ENCODE measurements at regions of chr16 and their contacts with region 1.

Region 1: GRCh38 chr16:8878521-8878911 is 3.6 kb upstream of the LITAFD start:
- DNase-seq: peak; percentile 77
- ATAC-seq: peak; percentile 65
- H3K4me3 ChIP-seq: peak overlapping the region; percentile 33; the same call in 1 of the 2 replicates
- H3K27ac ChIP-seq: peak overlapping the region; percentile 83
- H3K4me1 ChIP-seq: peaks cover 16% of the 10 kb centered on the region
- H3K27me3 ChIP-seq: no peaks in the 10 kb centered on the region
- CTCF ChIP-seq: no peak

Region 2: DNA sequence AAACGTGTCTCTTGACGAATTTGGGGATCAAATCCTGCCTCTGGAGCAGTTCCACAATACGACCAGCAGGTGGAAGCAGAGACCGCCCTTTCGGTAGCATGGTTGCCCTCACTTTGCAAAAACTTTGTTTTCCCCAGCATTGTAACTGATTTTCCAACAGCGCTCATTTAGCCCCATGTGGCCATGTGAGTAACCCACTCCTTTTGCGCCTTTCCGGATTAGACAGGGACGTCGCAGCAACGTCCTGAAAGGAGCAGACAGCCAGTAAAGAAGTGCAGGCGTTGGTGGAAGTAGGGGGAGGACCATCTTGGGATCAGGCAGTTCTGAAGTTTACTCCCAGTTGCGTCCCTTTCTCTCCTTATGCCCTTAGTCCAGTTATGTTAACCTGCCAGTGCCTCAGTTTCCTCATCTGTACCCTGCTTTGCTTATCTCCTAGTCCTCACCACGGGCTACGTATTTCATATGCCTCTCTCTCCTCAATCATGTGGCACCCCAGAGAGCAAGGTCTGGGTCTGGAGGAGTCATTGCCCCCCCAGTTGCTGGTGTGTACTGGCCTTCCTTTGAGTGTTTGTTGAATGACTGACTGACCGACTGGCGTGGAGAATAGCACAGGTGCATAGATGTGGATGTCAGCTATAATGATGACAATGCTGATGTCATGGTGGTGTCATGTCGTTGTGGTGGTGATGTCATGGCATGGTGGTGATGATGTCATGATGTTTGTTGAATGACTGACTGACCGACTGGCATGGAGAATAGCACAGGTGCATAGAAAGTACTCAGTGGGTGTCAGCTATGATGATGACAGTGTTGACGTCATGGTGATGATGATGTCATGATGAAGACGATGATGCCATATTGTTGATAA is 310.5 kb before region 1 on chr16:
- CTCF ChIA-PET with region 1: no interaction called
- POLR2A ChIA-PET with region 1: no interaction called
- intact Hi-C with region 1: loop called (anchors 1 kb)
- DNase-seq: peak; percentile 90
- ATAC-seq: peak; percentile 90
- H3K4me3 ChIP-seq: no peak overlapping the region
- H3K27ac ChIP-seq: no peak overlapping the region
- H3K4me1 ChIP-seq: no peaks in the 10 kb centered on the region
- H3K27me3 ChIP-seq: peaks cover 17% of the 10 kb centered on the region
- CTCF ChIP-seq: peak; percentile 94

Region 3: DNA sequence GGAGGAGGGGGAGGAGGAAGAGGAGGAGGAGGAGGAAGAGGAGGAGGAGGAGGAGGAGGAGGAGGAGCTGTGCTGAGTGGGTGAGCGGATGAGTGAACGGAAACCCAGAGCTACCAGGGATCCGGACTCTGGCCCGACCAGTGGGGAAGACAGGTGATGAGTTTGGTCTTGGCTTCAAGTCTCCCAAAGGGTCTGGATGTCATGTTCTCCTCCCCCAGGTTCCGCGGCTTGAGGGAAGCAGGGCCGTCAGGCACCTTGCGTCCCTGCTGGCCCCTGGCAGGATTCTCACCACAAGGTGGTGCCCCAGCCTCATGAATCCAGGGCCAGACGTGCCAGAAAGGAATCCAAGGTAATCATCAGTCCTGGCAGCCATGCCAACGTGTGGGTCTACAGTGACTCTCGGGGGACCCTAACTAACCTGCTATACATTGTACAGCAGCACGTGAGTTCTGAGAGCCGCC is 217.6 kb before region 1 on chr16:
- CTCF ChIA-PET with region 1: no interaction called
- POLR2A ChIA-PET with region 1: no interaction called
- intact Hi-C with region 1: loop called (anchors 1 kb)
- DNase-seq: peak; percentile 78
- ATAC-seq: peak; percentile 89
- H3K4me3 ChIP-seq: no peak overlapping the region
- H3K27ac ChIP-seq: no peak overlapping the region
- H3K4me1 ChIP-seq: no peaks in the 10 kb centered on the region
- H3K27me3 ChIP-seq: no peaks in the 10 kb centered on the region
- CTCF ChIP-seq: peak; percentile 72

Region 4: DNA sequence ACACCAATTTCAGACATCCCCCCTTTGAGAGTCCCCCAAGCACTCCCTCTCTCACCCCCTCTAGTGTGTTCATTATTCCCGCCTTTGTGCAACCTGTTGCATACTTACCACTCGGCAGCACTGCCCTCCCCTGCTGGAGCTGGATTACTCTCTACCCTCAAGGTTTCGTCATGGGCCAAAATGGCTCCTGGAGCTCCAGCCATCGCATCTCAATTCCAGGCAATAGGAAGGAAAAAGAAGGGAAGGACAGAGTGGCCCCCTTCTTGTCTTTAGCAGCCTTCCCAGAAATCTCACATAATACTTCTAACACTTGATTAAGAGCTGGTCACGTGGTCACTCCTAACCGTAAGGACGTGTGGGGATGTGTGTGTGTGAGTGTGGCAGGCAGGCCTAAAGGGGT is 101.3 kb before region 1 on chr16:
- CTCF ChIA-PET with region 1: no interaction called
- POLR2A ChIA-PET with region 1: interaction called, 10 read pairs
- intact Hi-C with region 1: no loop called
- DNase-seq: no peak
- ATAC-seq: no peak
- H3K4me3 ChIP-seq: no peak overlapping the region
- H3K27ac ChIP-seq: no peak overlapping the region
- H3K4me1 ChIP-seq: no peaks in the 10 kb centered on the region
- H3K27me3 ChIP-seq: no peaks in the 10 kb centered on the region
- CTCF ChIP-seq: no peak

Measured in PC-3 (cell line).